PC-3 (cell line): ENCODE measurements at regions of chr1 and their contacts with region 1.

Region 1: DNA sequence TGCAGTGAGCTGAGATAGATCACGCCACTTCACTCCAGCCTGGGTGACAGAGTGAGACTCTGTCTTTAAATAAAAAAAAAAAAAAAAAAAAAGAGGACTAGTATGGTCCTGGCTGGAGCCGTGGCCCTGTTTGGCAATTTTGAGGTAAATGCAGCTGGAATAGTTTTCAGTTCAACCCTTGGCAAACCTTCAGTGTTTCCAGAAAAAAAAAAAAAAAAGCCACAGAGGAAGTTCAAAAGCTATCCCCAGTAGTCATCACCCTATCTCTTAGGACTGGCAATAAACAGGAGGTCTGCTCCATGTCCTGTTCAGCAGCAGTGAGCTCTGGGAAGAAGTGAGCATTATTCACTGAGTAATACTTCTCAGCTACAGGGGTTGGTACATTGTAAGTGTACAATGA is 56.8 kb upstream of the ERRFI1 start:
- DNase-seq: peak; percentile 41
- ATAC-seq: peak; percentile 35; the same call in 1 of the 2 replicates
- H3K4me3 ChIP-seq: no peak overlapping the region
- H3K27ac ChIP-seq: peak overlapping the region; percentile 91
- H3K4me1 ChIP-seq: peaks cover 35% of the 10 kb centered on the region
- H3K27me3 ChIP-seq: no peaks in the 10 kb centered on the region
- CTCF ChIP-seq: no peak

Region 2: DNA sequence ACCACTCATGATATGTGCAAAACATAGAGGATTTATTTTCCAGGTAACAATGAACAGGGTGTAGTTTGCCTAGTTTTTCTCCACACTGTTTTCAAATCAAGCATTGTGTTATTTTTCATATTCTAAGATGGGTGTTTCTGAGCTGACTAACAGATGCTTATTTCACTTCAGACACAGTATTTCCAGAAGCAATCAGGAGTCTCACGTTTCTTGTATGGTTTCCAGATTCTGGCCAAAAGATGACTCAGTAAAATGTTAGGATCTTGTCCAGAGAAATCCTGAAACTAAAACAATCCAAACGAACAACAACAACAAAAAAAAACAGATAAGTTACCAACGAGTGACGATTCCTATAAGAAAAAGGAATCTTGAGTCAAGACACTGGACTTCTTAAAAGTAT is 235.3 kb before region 1 on chr1:
- CTCF ChIA-PET with region 1: no interaction called
- POLR2A ChIA-PET with region 1: interaction called, 18 read pairs
- intact Hi-C with region 1: no loop called
- DNase-seq: peak; percentile 55
- ATAC-seq: peak; percentile 51
- H3K4me3 ChIP-seq: no peak overlapping the region
- H3K27ac ChIP-seq: no peak overlapping the region
- H3K4me1 ChIP-seq: peaks cover 8% of the 10 kb centered on the region
- H3K27me3 ChIP-seq: no peaks in the 10 kb centered on the region
- CTCF ChIP-seq: no peak

Region 3: DNA sequence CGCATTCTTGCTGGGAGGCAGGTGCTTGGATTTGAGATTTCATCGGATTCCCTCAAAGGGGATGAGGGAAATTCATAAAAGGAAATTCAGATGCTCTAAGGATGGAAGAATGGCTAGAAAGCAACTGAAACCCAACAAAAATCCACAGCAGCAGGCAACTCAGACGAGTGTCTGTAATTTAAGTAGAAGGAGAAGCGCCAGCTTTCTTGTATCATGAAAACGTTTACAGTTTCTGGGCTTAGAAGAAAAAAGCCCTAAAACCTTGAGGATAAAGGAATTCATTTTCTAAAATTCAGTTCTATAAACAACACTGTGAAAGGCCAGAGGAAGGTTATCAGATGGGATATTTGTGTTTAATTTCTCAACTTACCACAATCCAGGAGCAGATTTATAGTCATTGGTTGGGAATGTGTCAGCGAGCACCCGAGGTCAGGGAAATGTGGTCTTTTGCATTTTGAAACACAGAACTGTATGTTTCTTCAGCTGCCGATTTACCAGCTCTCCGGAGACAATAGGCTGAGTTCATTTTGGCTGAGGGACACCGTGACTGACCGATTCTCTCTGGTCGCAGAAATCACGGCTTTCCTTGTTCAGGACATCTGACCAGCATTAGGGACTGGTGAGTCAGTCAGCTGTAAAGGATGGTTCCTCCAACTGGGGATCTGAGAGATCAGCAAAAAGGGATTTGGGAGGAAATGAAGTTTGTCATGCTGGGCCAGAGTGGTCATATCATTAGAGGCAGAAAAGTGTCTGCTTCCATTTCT is 54.7 kb after region 1 on chr1:
- CTCF ChIA-PET with region 1: no interaction called
- POLR2A ChIA-PET with region 1: no interaction called
- intact Hi-C with region 1: no loop called
- DNase-seq: peak; percentile 78
- ATAC-seq: peak; percentile 68
- H3K4me3 ChIP-seq: peak overlapping the region; percentile 36; the same call in 1 of the 2 replicates
- H3K27ac ChIP-seq: peak overlapping the region; percentile 69
- H3K4me1 ChIP-seq: peaks cover 35% of the 10 kb centered on the region
- H3K27me3 ChIP-seq: no peaks in the 10 kb centered on the region
- CTCF ChIP-seq: no peak

Region 4: GRCh38 chr1:8197493-8198282 is 114.7 kb after region 1 on chr1:
- CTCF ChIA-PET with region 1: no interaction called
- POLR2A ChIA-PET with region 1: interaction called, 16 read pairs
- intact Hi-C with region 1: no loop called
- DNase-seq: peak; percentile 96
- ATAC-seq: peak; percentile 63
- H3K4me3 ChIP-seq: no peak overlapping the region
- H3K27ac ChIP-seq: peak overlapping the region; percentile 98
- H3K4me1 ChIP-seq: peaks cover 61% of the 10 kb centered on the region
- H3K27me3 ChIP-seq: no peaks in the 10 kb centered on the region
- CTCF ChIP-seq: no peak

Region 5: GRCh38 chr1:8321612-8322011 is 238.7 kb after region 1 on chr1:
- CTCF ChIA-PET with region 1: no interaction called
- POLR2A ChIA-PET with region 1: interaction called, 10 read pairs
- intact Hi-C with region 1: no loop called
- DNase-seq: no peak
- ATAC-seq: no peak
- H3K4me3 ChIP-seq: no peak overlapping the region
- H3K27ac ChIP-seq: no peak overlapping the region
- H3K4me1 ChIP-seq: peaks cover 9% of the 10 kb centered on the region; the same call in 1 of the 2 replicates
- H3K27me3 ChIP-seq: no peaks in the 10 kb centered on the region
- CTCF ChIP-seq: no peak

Region 6: DNA sequence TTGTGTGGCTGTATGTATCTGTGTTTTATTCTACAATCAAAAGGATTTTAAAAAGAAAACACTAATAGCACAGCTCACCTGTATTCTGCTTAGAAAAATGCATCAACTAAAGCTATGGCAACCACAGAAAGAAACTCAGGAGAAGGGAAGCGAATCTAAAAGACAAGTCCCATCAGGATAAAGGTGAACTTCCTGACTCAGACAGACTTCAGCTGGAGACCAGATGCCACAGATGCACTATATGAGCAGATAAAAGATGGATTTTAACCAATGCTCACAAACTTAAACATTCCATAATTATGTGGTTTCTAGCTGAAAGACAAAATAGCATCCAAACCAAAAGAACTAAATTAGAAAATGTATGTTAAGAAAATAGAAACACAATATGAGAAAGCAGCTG is 503.5 kb after region 1 on chr1:
- CTCF ChIA-PET with region 1: interaction called, 10 read pairs
- POLR2A ChIA-PET with region 1: no interaction called
- intact Hi-C with region 1: no loop called
- DNase-seq: no peak
- ATAC-seq: no peak
- H3K4me3 ChIP-seq: no peak overlapping the region
- H3K27ac ChIP-seq: no peak overlapping the region
- H3K4me1 ChIP-seq: no peaks in the 10 kb centered on the region
- H3K27me3 ChIP-seq: no peaks in the 10 kb centered on the region
- CTCF ChIP-seq: no peak